ENCODE measurements at regions of chr2 and their contacts with region 1.

Region 1: GRCh38 chr2:162301151-162301804 is 17.2 kb downstream of the IFIH1 start:
- DNase-seq: peak; percentile 37
- H3K4me3 ChIP-seq: peak overlapping the region in 1 of 2 experiments; percentile 10; a peak in 1 of 4 replicates
- H3K27ac ChIP-seq: no peak overlapping the region
- H3K4me1 ChIP-seq: no peaks in the 10 kb centered on the region; a peak in 1 of 4 replicates
- H3K27me3 ChIP-seq: no peaks in the 10 kb centered on the region
- CTCF ChIP-seq: peak; percentile 95
- EP300 ChIP-seq: no peak
- RAD21 ChIP-seq: peak; percentile 68

Region 2: DNA sequence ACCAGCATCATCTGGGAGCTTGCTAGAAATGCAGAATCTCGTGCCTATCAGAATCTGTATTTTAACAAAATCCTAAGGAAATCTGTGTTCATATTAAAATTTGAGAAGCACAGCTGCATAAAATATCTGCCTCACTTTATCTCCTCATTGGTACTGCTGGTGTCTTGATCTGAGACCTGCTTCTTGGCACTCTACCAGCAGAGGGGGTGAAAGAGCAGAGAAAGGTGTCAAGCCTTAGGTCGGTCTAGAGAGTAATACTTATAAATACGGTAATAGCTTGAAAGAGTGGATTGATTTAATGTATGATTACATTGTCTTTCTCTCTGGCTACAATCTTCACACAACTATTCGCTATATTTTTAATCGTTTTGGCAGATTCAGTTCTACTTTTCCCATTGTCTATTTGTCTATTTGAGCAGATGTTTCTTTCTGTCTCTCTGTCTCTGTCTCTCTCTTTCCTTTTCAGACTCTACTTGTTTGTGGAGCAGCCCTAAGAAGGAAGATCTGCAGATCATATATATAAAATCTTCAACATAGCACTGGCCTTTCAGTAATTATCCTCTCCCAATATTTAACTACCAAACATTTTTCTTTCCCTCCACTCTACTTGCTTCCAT is 147.6 kb before region 1 on chr2:
- CTCF ChIA-PET with region 1: interaction called, 43 read pairs
- POLR2A ChIA-PET with region 1: no interaction called
- DNase-seq: peak; percentile 44
- H3K4me3 ChIP-seq: no peak overlapping the region; a peak in 1 of 4 replicates
- H3K27ac ChIP-seq: no peak overlapping the region
- H3K4me1 ChIP-seq: peaks cover 0 to 2% of the 10 kb centered on the region in 2 experiments; a peak in 2 of 4 replicates
- H3K27me3 ChIP-seq: no peaks in the 10 kb centered on the region
- CTCF ChIP-seq: peak; percentile 75
- EP300 ChIP-seq: no peak
- RAD21 ChIP-seq: peak; percentile 67

Region 3: GRCh38 chr2:162221064-162221463 is 80.2 kb before region 1 on chr2:
- CTCF ChIA-PET with region 1: interaction called, 104 read pairs
- POLR2A ChIA-PET with region 1: no interaction called
- DNase-seq: peak; percentile 61
- H3K4me3 ChIP-seq: no peak overlapping the region; a peak in 1 of 4 replicates
- H3K27ac ChIP-seq: no peak overlapping the region
- H3K4me1 ChIP-seq: no peaks in the 10 kb centered on the region; a peak in 1 of 4 replicates
- H3K27me3 ChIP-seq: no peaks in the 10 kb centered on the region
- CTCF ChIP-seq: peak; percentile 92
- EP300 ChIP-seq: no peak
- RAD21 ChIP-seq: peak; percentile 71

Region 4: DNA sequence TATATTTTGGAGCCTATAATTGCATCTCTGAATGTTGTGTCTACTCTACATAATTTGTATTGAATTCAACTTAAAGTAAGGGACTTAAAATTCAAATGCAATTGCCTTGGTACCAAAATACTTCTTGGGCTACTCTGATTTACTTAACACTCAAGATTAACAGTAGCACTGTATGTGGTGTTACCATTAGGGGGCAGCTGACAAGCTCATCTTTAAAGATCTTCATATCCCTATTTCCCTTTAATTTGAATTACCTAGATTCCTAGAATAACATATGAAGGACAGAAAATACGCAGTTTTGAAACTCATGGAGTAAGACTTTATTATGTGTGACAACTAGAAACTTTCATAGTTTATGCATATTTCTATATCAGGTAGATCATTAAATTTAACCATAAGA is 20.6 kb before region 1 on chr2:
- CTCF ChIA-PET with region 1: interaction called, 22 read pairs
- POLR2A ChIA-PET with region 1: no interaction called
- DNase-seq: no peak
- H3K4me3 ChIP-seq: no peak overlapping the region
- H3K27ac ChIP-seq: no peak overlapping the region
- H3K4me1 ChIP-seq: no peaks in the 10 kb centered on the region
- H3K27me3 ChIP-seq: no peaks in the 10 kb centered on the region
- CTCF ChIP-seq: 0 out of 2 replicates have a peak, but pooled peaks have one; percentile 9
- EP300 ChIP-seq: no peak
- RAD21 ChIP-seq: no peak

Region 5: DNA sequence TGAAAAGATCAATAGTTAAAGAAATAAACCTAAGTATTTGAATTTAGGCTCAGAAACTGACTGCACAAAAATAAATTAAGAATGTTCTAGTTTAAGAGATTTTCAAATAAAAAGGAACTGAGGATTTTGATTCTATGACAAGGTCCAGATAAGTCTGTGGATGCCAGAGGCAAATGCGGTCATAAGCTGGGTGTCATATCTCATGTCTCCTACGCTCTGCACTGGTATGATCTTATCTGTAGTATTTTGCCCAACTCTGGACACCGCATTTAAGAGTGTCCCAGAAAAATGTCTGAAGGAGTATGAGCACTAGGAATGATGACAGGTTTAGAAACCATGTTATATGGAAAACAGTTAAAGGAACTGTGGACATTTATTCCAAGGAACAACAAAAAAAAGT is 15.5 kb before region 1 on chr2:
- CTCF ChIA-PET with region 1: interaction called, 27 read pairs
- POLR2A ChIA-PET with region 1: no interaction called
- DNase-seq: no peak
- H3K4me3 ChIP-seq: no peak overlapping the region
- H3K27ac ChIP-seq: no peak overlapping the region
- H3K4me1 ChIP-seq: peaks cover 0 to 3% of the 10 kb centered on the region in 2 experiments; a peak in 1 of 4 replicates
- H3K27me3 ChIP-seq: no peaks in the 10 kb centered on the region
- CTCF ChIP-seq: no peak
- EP300 ChIP-seq: no peak
- RAD21 ChIP-seq: no peak

Region 6: DNA sequence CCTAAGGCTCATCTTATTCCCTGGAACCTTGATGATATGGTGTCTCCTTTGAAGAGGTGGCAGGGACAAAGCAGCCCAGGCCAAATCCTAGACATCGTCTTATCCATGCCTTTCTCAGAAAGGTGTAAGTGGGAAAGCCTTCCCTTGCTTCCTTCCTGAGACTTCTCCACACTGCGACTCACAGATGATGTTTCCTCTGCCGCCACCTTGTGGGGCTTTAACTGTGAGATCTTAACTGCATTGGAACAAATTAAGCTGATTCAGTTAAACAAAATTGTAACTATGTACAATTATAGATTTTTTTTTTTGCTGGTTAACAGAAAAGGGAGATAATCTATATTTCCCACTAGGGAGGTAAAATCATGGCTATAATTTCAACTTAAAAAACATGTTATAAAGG is 32.7 kb after region 1 on chr2:
- CTCF ChIA-PET with region 1: interaction called, 10 read pairs
- POLR2A ChIA-PET with region 1: no interaction called
- DNase-seq: no peak
- H3K4me3 ChIP-seq: no peak overlapping the region
- H3K27ac ChIP-seq: no peak overlapping the region
- H3K4me1 ChIP-seq: no peaks in the 10 kb centered on the region
- H3K27me3 ChIP-seq: no peaks in the 10 kb centered on the region
- CTCF ChIP-seq: peak; percentile 58
- EP300 ChIP-seq: no peak
- RAD21 ChIP-seq: peak; percentile 28; the same call in 1 of the 2 replicates